Posterior vena cava (tissue), 2 donors: ENCODE measurements at regions of chr1 and their contacts with region 1.

Region 1: GRCh38 chr1:40849801-40850592 is 12.2 kb downstream of the CITED4 start:
- DNase-seq: peak; percentile 89

Region 2: GRCh38 chr1:40606978-40607377 is 243.0 kb before region 1 on chr1:
- intact Hi-C with region 1: loop called in 1 of 2 experiments (anchors 10 kb)
- DNase-seq: no peak

Region 3: DNA sequence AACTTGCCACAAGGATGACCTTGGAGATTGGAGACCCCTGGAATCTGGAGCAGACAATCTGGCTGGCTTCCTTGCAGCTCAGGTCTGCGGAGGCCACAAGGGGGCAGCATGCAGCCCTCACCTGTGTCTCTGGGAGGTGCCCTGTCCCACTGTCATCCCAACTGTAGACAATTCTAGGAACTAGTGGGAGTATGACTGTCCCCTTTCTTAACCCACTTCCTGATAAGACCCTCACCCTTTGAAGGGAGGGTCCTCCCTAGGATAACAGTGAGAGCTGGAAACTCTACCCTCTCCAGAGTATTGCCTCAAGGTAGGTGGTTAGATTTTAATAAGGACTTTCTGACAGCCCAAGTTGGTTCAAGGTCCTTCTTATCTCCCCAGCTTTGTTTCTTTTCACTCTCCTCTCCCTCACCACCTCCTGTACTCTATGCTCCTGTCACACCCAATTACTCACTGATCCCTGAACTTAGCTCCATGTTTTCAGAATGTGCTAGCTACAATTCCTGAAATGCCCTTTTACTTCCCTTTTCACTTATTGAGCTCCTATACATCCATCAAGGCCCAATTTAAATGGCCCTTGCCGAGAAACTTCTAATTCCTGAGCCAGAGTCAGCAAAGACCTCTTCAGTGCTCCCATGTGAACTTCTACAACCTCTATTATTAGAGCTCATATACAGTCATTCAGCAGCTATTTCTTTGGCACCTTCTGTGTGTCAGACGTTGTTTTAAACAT is 75.6 kb before region 1 on chr1:
- intact Hi-C with region 1: loop called (anchors 2 to 5 kb)
- DNase-seq: no peak

Region 4: GRCh38 chr1:40818264-40818961 is 31.6 kb before region 1 on chr1:
- intact Hi-C with region 1: loop called in 1 of 2 experiments (anchors 1 kb)
- DNase-seq: peak; percentile 87